Activated T-helper 1 cell treated with anti-CD3 and anti-CD28 coated beads, Interleukin-12 subunit alpha, Interleukin-12 subunit beta, Interleukin-2, Interleukin-4 antibody, amounts not matched to agents 30 ng/mL and 10 ng/mL and 1 ng/mL, durations not matched to agents 14 hours and 24 hours and 36 hours (primary cell): ENCODE measurements at regions of chr5 and their contacts with region 1.

Region 1: DNA sequence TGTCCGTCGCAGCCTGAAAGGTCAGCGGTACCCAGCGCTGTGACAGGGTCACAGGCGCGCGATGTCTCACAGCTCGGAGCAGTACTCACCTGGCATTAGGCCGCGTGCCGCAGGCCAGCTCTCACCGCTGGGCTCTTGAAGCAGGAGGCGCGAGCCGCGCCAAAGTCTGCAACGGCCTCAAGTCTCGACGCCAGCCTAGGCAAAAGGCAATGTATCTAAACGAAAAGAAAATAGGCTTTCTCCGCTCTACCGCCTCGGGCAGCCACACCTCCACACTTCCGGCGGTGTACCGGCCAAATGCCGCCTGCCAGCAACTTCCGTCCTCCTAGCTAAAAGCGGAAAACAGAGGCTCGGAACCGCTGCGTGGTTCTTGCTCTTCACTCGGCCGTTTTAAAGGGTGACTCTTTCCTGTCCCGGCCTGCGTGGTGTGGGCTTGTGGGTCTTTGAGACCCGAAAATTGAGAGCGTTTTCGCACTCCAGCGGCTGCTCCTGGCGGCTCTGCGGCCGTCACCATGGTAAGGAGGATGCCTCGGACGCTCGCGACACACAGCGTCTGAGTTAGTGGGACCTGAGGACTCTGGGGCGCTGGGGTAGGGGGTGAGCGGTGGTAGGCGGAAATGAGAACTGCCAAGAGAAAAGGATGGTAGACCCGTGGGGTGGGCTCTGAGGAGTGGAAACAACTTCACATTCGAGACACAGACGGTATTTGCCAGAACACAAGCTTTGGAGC is at the starts of genes GFM2 and NSA2:
- DNase-seq: peak; percentile 91
- H3K4me3 Mint-ChIP-seq: peak within 1 kb of the TSS; percentile 98
- H3K27ac Mint-ChIP-seq: peak within 1 kb of the TSS; percentile 98
- H3K4me1 Mint-ChIP-seq: peaks cover 17% of the 10 kb centered on the region
- H3K27me3 Mint-ChIP-seq: no peaks in the 10 kb centered on the region
- total RNA-seq, gene GFM2: 32.4 and 35.5 TPM in 2 replicates
- total RNA-seq, gene NSA2: 89.0 and 94.9 TPM in 2 replicates

Region 2: GRCh38 chr5:73498057-73499008 is 1268.7 kb before region 1 on chr5 and contains the start of gene BTF3:
- intact Hi-C with region 1: loop called (anchors 2 kb)
- DNase-seq: peak; percentile 92
- H3K4me3 Mint-ChIP-seq: peak within 1 kb of the TSS; percentile 99
- H3K27ac Mint-ChIP-seq: peak within 1 kb of the TSS; percentile 99
- H3K4me1 Mint-ChIP-seq: peaks cover 39% of the 10 kb centered on the region
- H3K27me3 Mint-ChIP-seq: peaks cover 12% of the 10 kb centered on the region
- total RNA-seq, gene BTF3: 913 and 929 TPM in 2 replicates

Region 3: DNA sequence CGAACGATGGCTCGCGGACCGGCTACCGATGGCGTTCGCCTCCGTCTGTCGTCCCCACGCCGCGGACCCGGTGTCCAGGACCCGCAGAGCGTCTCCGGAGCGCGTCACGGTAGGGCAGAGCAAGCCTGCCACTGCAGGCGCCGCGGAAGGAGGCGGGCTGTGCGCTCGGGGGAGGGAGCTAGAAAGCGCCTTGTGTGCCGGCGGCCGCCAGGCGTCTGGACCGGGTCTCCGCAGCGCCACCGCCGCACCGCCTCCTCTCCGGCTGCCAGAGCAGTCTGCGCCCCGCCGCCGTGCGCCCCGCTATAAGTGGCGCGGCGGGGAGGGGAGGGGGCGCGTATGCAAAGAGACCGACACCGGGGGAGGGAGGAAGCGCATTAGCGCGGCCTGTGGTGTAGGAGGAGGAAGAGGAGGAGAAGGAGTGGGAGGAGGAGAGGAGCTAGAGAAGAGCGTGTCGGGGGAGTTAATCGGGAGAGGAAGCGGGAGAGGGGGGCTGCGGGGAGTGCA is 126.5 kb before region 1 on chr5 and contains the start of gene ENC1:
- intact Hi-C with region 1: loop called (anchors 5 kb)
- DNase-seq: peak; percentile 72
- H3K4me3 Mint-ChIP-seq: peak within 1 kb of the TSS; percentile 86
- H3K27ac Mint-ChIP-seq: peak within 1 kb of the TSS; percentile 64
- H3K4me1 Mint-ChIP-seq: peaks cover 49% of the 10 kb centered on the region
- H3K27me3 Mint-ChIP-seq: peaks cover 39% of the 10 kb centered on the region
- total RNA-seq, gene ENC1: 2.7 and 3.2 TPM in 2 replicates

Region 4: DNA sequence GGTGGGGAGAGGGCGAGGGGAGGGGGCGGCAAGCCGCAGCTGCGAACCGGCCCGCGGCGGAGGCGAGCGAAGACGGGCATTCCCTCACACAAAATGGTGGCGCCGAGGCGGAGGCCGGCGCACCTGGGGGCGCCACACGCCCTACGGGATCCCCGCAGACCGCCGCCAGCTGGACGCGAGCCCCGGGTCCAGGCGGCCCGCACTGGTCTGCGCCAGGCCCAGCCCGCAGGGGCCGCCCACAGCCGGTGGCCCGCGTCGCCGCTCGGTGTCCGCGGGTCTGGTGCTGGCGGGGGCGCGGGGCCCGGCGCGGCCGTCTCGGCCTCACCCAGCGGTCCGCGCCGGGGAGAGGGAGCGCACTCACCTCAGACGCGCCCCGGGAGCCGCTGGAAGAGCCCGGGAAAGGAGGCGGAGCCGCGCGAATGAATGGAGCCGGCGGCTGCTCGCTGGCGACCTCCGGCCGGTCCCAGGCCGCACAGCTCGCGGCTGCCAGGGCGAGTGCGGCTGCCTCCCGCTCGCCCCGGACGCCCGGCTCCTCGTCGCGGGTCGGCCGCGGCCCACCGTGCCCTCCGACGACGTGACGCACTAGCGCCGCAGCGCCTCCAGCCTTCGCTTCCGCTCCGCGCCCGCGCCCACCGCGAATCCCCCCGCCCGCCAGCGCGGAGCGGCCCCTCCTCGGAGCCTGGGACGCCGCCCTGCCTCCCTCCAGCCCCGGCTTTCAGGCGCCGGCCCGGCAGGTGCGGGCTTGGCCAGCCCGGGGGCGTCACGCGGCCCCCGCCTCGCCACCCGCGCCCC is 99.0 kb after region 1 on chr5 and contains the start of gene FAM169A:
- intact Hi-C with region 1: loop called (anchors 1 kb)
- DNase-seq: peak; percentile 19
- H3K4me3 Mint-ChIP-seq: peak within 1 kb of the TSS; percentile 88
- H3K27ac Mint-ChIP-seq: peak within 1 kb of the TSS; percentile 76
- H3K4me1 Mint-ChIP-seq: peaks cover 11% of the 10 kb centered on the region
- H3K27me3 Mint-ChIP-seq: peaks cover 25% of the 10 kb centered on the region
- total RNA-seq, gene FAM169A: 3.2 and 3.5 TPM in 2 replicates

Region 5: GRCh38 chr5:75265731-75266130 is 498.7 kb after region 1 on chr5:
- intact Hi-C with region 1: loop called (anchors 1 kb)
- DNase-seq: no peak
- H3K4me3 Mint-ChIP-seq: no peak overlapping the region
- H3K27ac Mint-ChIP-seq: no peak overlapping the region
- H3K4me1 Mint-ChIP-seq: no peaks in the 10 kb centered on the region
- H3K27me3 Mint-ChIP-seq: peaks cover 5% of the 10 kb centered on the region

Region 6: GRCh38 chr5:75566710-75567309 is 799.8 kb after region 1 on chr5:
- intact Hi-C with region 1: loop called (anchors 2 kb)
- DNase-seq: peak; percentile 39
- H3K4me3 Mint-ChIP-seq: peak overlapping the region; percentile 29
- H3K27ac Mint-ChIP-seq: peak overlapping the region; percentile 81
- H3K4me1 Mint-ChIP-seq: peaks cover 53% of the 10 kb centered on the region
- H3K27me3 Mint-ChIP-seq: no peaks in the 10 kb centered on the region